Activated CD4-positive, alpha-beta memory T cell treated with anti-CD3 and anti-CD28 coated beads for 36 hours (primary cell): ENCODE measurements at regions of chr22 and their contacts with region 1.

Region 1: DNA sequence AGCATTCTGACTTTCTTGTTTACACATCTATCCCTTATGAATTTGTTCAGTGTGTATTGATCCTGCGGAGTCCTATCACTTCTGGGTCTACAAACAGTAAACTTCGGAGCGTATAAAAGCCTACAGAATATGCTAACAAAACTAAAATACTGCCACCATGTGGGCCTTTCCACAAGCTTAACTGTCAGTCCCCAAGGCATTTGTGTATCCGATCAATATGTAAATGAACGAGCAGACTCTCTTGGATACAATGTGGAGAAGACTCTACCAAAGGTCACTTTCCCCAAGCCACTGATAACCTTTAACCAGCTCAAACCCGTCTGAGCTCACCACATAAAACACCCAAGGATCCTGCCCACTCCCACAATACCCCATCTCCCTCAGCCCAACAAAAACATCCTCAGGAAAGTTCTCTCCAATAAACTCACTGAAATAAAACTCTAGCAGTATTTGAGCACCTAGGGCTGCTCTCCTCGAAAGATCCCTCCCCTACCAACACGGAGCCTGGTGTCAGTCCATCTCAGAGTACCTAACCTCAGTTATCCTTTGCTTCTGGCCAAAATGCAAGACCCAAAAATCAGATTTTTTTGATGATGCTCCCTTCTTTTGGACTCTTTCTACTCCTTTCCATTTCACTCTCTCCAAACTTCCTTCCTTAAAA is 17.8 kb downstream of the ADA2 start:
- DNase-seq: no peak
- H3K4me3 Mint-ChIP-seq: no peak overlapping the region
- H3K27ac Mint-ChIP-seq: no peak overlapping the region
- H3K4me1 Mint-ChIP-seq: no peaks in the 10 kb centered on the region
- H3K27me3 Mint-ChIP-seq: no peaks in the 10 kb centered on the region

Region 2: DNA sequence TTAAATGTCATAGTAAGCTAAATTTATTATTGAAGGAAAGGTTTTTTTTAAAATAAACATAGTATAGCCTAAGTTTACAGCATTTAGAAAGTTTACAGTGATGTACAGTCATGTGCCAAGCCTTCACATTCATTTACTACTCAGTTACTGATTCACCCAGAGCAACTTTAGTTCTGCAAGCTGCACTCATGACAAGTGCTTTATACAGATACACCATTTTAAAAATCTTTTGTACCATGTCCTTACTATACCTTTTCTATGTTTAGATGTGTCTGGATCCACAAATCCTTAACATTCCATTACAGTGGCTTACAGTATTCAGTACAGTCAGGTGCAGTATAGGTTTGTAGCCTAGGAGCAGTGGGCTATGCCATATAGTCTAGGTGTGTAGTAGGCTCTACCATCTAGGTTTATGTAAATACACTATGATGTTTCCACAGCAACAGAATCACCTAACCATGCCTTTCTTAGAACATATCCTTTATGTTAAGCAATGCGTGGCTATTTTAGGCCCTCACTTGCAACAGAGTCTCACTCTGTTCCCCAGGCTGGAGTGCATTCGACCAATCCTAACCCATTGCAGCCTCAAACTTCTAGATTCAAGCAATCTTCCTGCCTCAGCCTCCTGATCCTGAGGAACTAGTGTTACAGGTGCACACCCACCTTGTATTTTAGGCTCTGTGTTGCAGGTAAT is 282.4 kb after region 1 on chr22:
- CTCF ChIA-PET with region 1: no interaction called
- POLR2A ChIA-PET with region 1: no interaction called
- intact Hi-C with region 1: loop called (anchors 10 kb)
- DNase-seq: no peak
- H3K4me3 Mint-ChIP-seq: no peak overlapping the region
- H3K27ac Mint-ChIP-seq: no peak overlapping the region
- H3K4me1 Mint-ChIP-seq: no peaks in the 10 kb centered on the region
- H3K27me3 Mint-ChIP-seq: peaks cover 6% of the 10 kb centered on the region